Panc1 (cell line): ENCODE measurements at regions of chr2 and their contacts with region 1.

Region 1: DNA sequence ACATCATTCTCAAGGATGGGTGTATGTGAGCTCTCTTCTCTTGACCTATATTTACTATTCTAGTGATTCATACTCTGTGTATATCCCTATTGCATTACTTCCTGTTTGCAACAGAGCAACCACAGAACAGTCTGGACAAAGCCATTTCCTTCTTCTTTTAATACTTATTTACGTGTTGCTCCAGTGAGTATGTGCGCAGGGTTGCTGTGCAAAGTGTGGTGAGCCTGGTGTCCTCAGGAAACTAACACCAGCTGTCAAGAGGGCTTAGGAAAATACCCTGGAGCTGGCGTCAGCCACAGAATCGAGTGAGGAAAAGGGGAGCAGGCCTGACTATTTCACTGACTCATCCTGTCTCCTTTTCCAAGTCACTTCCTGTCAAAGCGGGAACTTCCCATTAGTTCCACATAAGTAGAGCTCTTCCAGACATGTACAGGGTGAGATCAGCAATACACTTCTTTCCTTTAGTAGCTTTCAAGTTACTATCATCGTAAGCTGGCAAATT is 214.1 kb upstream of the COPS8 start:
- DNase-seq: peak; percentile 45
- ATAC-seq: peak; percentile 65; the same call in 1 of the 2 replicates
- H3K4me3 ChIP-seq: no peak overlapping the region
- H3K27ac ChIP-seq: no peak overlapping the region
- H3K4me1 ChIP-seq: no peaks in the 10 kb centered on the region
- H3K27me3 ChIP-seq: peaks cover 2% of the 10 kb centered on the region; the same call in 1 of the 2 replicates
- CTCF ChIP-seq: no peak

Region 2: DNA sequence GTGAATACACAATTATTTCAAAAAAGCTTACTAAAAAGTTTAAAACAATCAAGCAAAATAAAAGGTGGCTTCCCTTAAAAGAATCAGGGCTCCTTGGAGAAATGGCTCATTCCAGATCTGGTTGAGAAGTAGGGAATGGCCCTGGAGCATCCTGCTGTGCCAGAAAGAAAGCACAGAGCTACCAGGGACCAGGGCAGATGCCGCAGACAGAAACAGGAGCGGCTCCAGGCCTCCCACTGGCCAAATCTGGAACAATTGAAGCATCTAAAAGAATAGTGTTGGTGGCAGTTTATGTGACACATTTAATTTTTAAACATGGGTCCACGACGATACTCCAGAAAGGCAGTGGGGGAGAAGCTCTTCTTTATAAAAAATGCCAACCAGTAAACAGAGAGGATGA is 778.8 kb before region 1 on chr2:
- CTCF ChIA-PET with region 1: no interaction called
- POLR2A ChIA-PET with region 1: interaction called, 11 read pairs
- in situ Hi-C with region 1: no loop called
- intact Hi-C with region 1: no loop called
- DNase-seq: no peak
- ATAC-seq: no peak
- H3K4me3 ChIP-seq: no peak overlapping the region
- H3K27ac ChIP-seq: no peak overlapping the region
- H3K4me1 ChIP-seq: no peaks in the 10 kb centered on the region
- H3K27me3 ChIP-seq: no peaks in the 10 kb centered on the region
- CTCF ChIP-seq: no peak